AG04450 (cell line): ENCODE measurements at regions of chr1 and their contacts with region 1.

Region 1: GRCh38 chr1:25520446-25521061 is 22.9 kb upstream of the LDLRAP1 start:
- DNase-seq: peak; percentile 39
- H3K4me3 ChIP-seq: no peak overlapping the region
- H3K27ac ChIP-seq: peak overlapping the region; percentile 11
- H3K27me3 ChIP-seq: peaks cover 25% of the 10 kb centered on the region
- CTCF ChIP-seq: peak; percentile 86

Region 2: DNA sequence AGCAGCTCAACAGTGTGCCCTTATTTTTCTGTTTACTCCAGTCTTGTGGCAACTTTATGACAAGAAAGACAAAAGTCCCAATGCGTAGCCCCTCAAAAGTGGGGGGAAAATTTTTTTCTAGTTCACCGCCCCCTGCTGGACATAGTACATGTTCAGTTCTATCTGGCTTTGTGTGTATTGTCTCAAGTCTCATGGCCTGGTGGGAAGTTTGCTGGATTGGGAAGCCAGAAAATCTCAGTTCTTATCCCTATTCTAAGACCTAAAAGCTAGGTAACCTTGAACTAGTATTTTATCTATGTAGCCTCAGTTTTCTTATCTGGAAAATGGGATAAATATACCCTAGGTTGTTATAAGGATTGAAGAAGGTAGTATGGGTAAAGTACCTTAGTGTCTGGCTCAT is 32.9 kb before region 1 on chr1:
- CTCF ChIA-PET with region 1: interaction called, 10 read pairs
- POLR2A ChIA-PET with region 1: no interaction called
- DNase-seq: no peak
- H3K4me3 ChIP-seq: no peak overlapping the region
- H3K27ac ChIP-seq: no peak overlapping the region
- H3K27me3 ChIP-seq: no peaks in the 10 kb centered on the region
- CTCF ChIP-seq: peak; percentile 46

Region 3: GRCh38 chr1:25503551-25504426 is 16.8 kb before region 1 on chr1:
- CTCF ChIA-PET with region 1: interaction called, 28 read pairs
- POLR2A ChIA-PET with region 1: no interaction called
- DNase-seq: no peak
- H3K4me3 ChIP-seq: no peak overlapping the region
- H3K27ac ChIP-seq: peak overlapping the region; percentile 11
- H3K27me3 ChIP-seq: no peaks in the 10 kb centered on the region
- CTCF ChIP-seq: peak; percentile 32; the same call in 1 of the 2 replicates

Region 4: GRCh38 chr1:25580927-25581326 is 60.4 kb after region 1 on chr1:
- CTCF ChIA-PET with region 1: interaction called, 11 read pairs
- POLR2A ChIA-PET with region 1: no interaction called
- DNase-seq: no peak
- H3K4me3 ChIP-seq: no peak overlapping the region
- H3K27ac ChIP-seq: no peak overlapping the region
- H3K27me3 ChIP-seq: peaks cover 17% of the 10 kb centered on the region
- CTCF ChIP-seq: 0 out of 2 replicates have a peak, but pooled peaks have one; percentile 2

Region 5: DNA sequence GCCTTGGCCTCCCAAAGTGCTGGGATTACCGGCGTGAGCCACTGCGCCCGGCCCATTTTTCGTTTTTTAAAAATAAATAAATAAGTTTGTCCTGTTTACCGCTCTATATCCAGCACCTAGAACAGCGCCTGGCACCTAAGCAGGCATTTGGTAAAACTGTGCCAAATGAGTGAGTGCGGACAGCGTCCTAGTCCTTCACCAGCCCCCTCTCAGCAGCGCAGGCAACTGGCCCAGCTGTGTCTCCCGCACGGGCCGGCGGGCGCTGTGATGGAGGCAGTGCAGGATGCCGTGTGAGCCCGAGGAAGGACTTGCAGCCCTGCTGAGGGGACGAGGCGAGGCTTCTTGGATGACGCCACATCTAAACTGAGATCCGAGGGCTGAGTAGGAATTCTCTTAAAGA is 72.1 kb after region 1 on chr1:
- CTCF ChIA-PET with region 1: no interaction called
- POLR2A ChIA-PET with region 1: no interaction called
- DNase-seq: no peak
- H3K4me3 ChIP-seq: no peak overlapping the region
- H3K27ac ChIP-seq: no peak overlapping the region
- H3K27me3 ChIP-seq: peaks cover 3% of the 10 kb centered on the region
- CTCF ChIP-seq: no peak